ENCODE measurements at regions of chr17 and their contacts with region 1.

Region 1: GRCh38 chr17:10205549-10206185 is 7.3 kb upstream of the GAS7 start:
- DNase-seq: no peak
- H3K4me3 ChIP-seq: no peak overlapping the region
- H3K27ac ChIP-seq: no peak overlapping the region
- H3K4me1 ChIP-seq: peaks cover 0 to 26% (median 22%) of the 10 kb centered on the region in 4 donors
- H3K27me3 ChIP-seq: peaks cover 0 to under 1% (median 0%) of the 10 kb centered on the region in 4 donors
- CTCF ChIP-seq: no peak
- EP300 ChIP-seq: no peak
- POLR2A ChIP-seq: no peak

Region 2: GRCh38 chr17:10063730-10064241 is 141.9 kb before region 1 on chr17:
- intact Hi-C with region 1: no loop called
- DNase-seq: no peak
- H3K4me3 ChIP-seq: no peak overlapping the region
- H3K27ac ChIP-seq: peak overlapping the region in 3 of 4 donors; percentile 39 to 47 (median 41)
- H3K4me1 ChIP-seq: peaks cover 24 to 55% (median 51%) of the 10 kb centered on the region in 4 donors
- H3K27me3 ChIP-seq: no peaks in the 10 kb centered on the region
- CTCF ChIP-seq: no peak
- EP300 ChIP-seq: no peak
- POLR2A ChIP-seq: no peak

Region 3: GRCh38 chr17:10087081-10087754 is 118.4 kb before region 1 on chr17:
- intact Hi-C with region 1: loop called (anchors 10 kb)
- DNase-seq: no peak
- H3K4me3 ChIP-seq: no peak overlapping the region
- H3K27ac ChIP-seq: peak overlapping the region in 3 of 4 donors; percentile 5 to 34 (median 30)
- H3K4me1 ChIP-seq: peaks cover 34 to 68% (median 60%) of the 10 kb centered on the region in 4 donors
- H3K27me3 ChIP-seq: no peaks in the 10 kb centered on the region
- CTCF ChIP-seq: no peak
- EP300 ChIP-seq: no peak
- POLR2A ChIP-seq: no peak

Region 4: GRCh38 chr17:10265100-10265810 is 59.6 kb after region 1 on chr17:
- intact Hi-C with region 1: no loop called
- DNase-seq: no peak
- H3K4me3 ChIP-seq: no peak overlapping the region
- H3K27ac ChIP-seq: no peak overlapping the region
- H3K4me1 ChIP-seq: peaks cover 0 to 10% (median 0%) of the 10 kb centered on the region in 4 donors
- H3K27me3 ChIP-seq: no peaks in the 10 kb centered on the region
- CTCF ChIP-seq: no peak
- EP300 ChIP-seq: no peak
- POLR2A ChIP-seq: no peak

Region 5: GRCh38 chr17:10574324-10574723 is 368.7 kb after region 1 on chr17:
- intact Hi-C with region 1: no loop called
- DNase-seq: no peak
- H3K4me3 ChIP-seq: no peak overlapping the region
- H3K27ac ChIP-seq: no peak overlapping the region
- H3K4me1 ChIP-seq: no peaks in the 10 kb centered on the region
- H3K27me3 ChIP-seq: peaks cover 0 to 10% (median 0%) of the 10 kb centered on the region in 4 donors
- CTCF ChIP-seq: no peak
- EP300 ChIP-seq: no peak
- POLR2A ChIP-seq: no peak

Measured in esophagus muscularis mucosa (tissue), 4 donors.